ENCODE measurements at regions of chr1 and their contacts with region 1.

Region 1: DNA sequence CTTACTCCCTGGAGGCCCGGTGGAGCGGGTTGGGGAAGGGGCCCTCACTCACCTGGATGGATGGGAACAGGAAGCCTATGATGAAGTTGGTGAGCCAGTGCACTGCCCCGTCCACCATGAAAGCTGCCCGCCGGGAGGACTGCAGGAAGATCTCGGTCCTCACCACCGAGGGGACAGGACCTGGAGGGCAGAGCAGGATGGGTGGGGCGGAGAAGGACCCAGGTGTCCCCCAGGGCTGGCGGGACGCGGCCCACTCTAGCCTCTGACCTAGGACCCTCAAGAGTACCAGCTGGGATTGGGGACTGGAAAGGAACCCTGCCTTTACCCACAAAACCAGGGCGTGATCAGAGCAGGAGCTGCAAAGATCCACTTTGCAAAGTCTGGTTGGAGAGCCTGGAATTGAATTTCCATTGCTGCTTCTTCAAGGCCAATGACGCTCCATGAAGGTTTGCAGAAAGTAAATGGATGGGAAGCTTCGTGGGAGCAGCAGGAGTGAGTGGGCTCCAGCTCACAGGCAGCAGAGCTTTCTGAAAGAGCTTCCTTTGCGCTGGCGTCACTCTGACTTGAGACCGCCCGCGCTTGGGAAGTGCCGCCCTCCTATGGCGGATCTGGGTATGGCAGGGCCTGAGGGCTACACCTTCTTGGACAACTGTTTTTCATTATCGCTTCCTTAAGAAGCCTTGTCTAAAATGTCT is 21.4 kb downstream of the SLC2A7 start:
- DNase-seq: peak; percentile 85
- H3K4me3 ChIP-seq: no peak overlapping the region
- H3K27ac ChIP-seq: no peak overlapping the region
- H3K4me1 ChIP-seq: no peaks in the 10 kb centered on the region
- H3K27me3 ChIP-seq: peaks cover 0 to 4% of the 10 kb centered on the region in 2 experiments
- CTCF ChIP-seq: peak; percentile 91 to 96
- POLR2A ChIP-seq: no peak

Region 2: DNA sequence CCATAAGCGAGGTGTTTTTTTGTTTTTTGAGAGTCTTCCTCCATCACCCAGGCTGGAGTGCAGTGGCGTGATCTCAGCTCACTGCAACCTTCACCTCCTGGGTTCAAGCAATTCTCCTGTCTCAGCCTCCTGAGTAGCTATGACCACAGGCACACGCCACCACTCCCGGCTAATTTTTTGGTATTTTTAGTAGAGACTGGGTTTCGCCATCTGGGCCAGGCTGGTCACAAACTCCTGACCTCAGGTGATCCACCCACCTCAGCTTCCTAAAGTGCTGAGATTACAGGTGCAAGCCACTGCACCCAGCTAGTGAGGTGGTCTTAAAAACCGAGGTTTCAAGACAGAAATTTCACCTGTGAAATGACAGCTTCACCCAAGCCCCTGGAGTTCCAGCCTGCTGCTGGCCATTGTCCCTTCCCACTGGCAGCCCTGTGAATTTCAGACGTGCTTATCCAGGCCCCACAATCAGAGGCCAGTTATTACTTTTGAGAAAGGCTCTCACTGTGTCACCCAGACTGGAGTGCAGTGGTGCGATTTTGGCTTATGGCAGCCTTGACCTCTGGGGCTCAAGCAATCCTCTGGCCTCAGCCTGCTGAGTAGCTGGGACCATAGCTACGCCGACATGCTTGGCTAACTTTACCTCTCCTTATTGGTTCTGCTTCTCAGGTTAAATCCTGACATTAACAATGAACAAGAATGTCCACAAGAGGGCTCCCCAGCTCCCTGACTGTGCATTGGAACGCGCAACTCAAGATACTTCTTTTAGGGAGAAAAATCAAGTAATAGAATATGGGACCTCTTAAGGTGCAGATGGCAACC is 145.8 kb before region 1 on chr1:
- CTCF ChIA-PET with region 1: interaction called, 106 read pairs
- POLR2A ChIA-PET with region 1: no interaction called
- dilution Hi-C with region 1: no loop called
- intact Hi-C with region 1: loop called (anchors 5 kb)
- DNase-seq: peak; percentile 83
- H3K4me3 ChIP-seq: no peak overlapping the region
- H3K27ac ChIP-seq: peak overlapping the region; percentile 80
- H3K4me1 ChIP-seq: peaks cover 36% of the 10 kb centered on the region
- H3K27me3 ChIP-seq: no peaks in the 10 kb centered on the region
- CTCF ChIP-seq: peak; percentile 65
- POLR2A ChIP-seq: peak; percentile 33

Region 3: DNA sequence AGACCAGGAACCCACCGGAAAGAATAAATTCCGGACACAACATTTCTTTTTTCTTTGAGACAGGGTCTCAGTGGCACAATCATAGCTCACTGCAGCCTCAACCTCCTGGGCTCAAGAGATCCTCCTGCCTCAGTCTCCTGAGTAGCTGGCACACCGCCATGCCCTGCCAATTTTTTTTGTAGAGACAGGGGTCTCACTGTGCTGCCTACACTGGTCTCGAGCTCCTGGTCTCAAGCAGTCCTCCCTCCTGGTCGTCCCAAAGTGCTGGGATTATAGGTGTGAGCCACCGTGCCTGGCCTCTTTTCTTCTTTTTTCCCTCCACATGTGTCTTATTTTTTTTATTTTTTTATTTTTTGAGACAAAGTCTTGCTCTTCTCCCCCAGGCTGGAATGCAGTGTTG is 105.8 kb before region 1 on chr1:
- CTCF ChIA-PET with region 1: interaction called, 10 read pairs
- POLR2A ChIA-PET with region 1: no interaction called
- dilution Hi-C with region 1: no loop called
- intact Hi-C with region 1: no loop called
- DNase-seq: no peak
- H3K4me3 ChIP-seq: no peak overlapping the region
- H3K27ac ChIP-seq: peak overlapping the region; percentile 17
- H3K4me1 ChIP-seq: peaks cover 12% of the 10 kb centered on the region
- H3K27me3 ChIP-seq: peaks cover 0 to 5% of the 10 kb centered on the region in 2 experiments
- CTCF ChIP-seq: no peak
- POLR2A ChIP-seq: no peak

Region 4: DNA sequence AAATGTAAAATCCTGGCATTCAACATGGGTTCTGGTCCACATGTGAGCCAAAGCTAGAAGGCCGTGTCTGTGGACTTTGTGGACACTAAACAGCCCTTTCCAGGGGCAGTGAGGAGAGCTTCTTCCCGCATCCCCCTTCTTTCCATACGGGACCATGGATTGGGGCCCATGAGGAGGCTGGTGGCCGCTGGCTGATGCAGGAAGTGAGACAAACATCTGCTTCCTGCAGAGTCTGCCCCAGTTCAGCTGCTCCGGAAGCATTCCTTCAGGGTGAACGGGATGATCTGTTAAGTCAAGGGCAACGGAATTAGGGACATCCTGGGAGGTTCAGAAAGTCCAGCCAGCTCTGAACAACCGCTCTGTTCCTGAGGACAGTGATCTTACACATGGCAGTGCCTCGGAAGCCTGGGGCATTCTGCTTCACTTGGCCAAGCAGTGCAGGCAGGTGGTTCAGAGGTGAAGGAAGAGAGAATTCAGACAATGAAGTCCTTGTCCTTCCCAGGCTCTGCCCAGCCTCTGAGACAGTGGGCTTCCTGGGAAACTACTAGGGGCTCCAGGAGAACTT is 57.6 kb before region 1 on chr1:
- CTCF ChIA-PET with region 1: interaction called, 33 read pairs
- POLR2A ChIA-PET with region 1: no interaction called
- dilution Hi-C with region 1: no loop called
- intact Hi-C with region 1: no loop called
- DNase-seq: peak; percentile 52
- H3K4me3 ChIP-seq: no peak overlapping the region
- H3K27ac ChIP-seq: peak overlapping the region; percentile 46
- H3K4me1 ChIP-seq: peaks cover 14% of the 10 kb centered on the region
- H3K27me3 ChIP-seq: no peaks in the 10 kb centered on the region
- CTCF ChIP-seq: no peak
- POLR2A ChIP-seq: no peak

Region 5: GRCh38 chr1:8992936-8993687 is 11.7 kb before region 1 on chr1:
- CTCF ChIA-PET with region 1: interaction called, 119 read pairs
- POLR2A ChIA-PET with region 1: no interaction called
- dilution Hi-C with region 1: no loop called
- intact Hi-C with region 1: loop called (anchors 2 kb)
- DNase-seq: no peak
- H3K4me3 ChIP-seq: no peak overlapping the region
- H3K27ac ChIP-seq: no peak overlapping the region
- H3K4me1 ChIP-seq: no peaks in the 10 kb centered on the region
- H3K27me3 ChIP-seq: no peaks in the 10 kb centered on the region
- CTCF ChIP-seq: peak; percentile 14 to 27
- POLR2A ChIP-seq: no peak

Region 6: GRCh38 chr1:9065213-9065751 is 60.4 kb after region 1 on chr1:
- CTCF ChIA-PET with region 1: interaction called, 10 read pairs
- POLR2A ChIA-PET with region 1: no interaction called
- dilution Hi-C with region 1: no loop called
- intact Hi-C with region 1: no loop called
- DNase-seq: no peak
- H3K4me3 ChIP-seq: no peak overlapping the region
- H3K27ac ChIP-seq: no peak overlapping the region
- H3K4me1 ChIP-seq: peaks cover 3% of the 10 kb centered on the region
- H3K27me3 ChIP-seq: no peaks in the 10 kb centered on the region
- CTCF ChIP-seq: no peak
- POLR2A ChIP-seq: no peak

Region 7: GRCh38 chr1:9196129-9197040 is 191.5 kb after region 1 on chr1:
- CTCF ChIA-PET with region 1: interaction called, 3 read pairs
- POLR2A ChIA-PET with region 1: no interaction called
- dilution Hi-C with region 1: no loop called
- intact Hi-C with region 1: loop called (anchors 10 kb)
- DNase-seq: peak; percentile 66
- H3K4me3 ChIP-seq: no peak overlapping the region
- H3K27ac ChIP-seq: no peak overlapping the region
- H3K4me1 ChIP-seq: peaks cover 14% of the 10 kb centered on the region
- H3K27me3 ChIP-seq: peaks cover 2 to 5% of the 10 kb centered on the region in 2 experiments
- CTCF ChIP-seq: peak; percentile 74 to 75
- POLR2A ChIP-seq: no peak

Region 8: DNA sequence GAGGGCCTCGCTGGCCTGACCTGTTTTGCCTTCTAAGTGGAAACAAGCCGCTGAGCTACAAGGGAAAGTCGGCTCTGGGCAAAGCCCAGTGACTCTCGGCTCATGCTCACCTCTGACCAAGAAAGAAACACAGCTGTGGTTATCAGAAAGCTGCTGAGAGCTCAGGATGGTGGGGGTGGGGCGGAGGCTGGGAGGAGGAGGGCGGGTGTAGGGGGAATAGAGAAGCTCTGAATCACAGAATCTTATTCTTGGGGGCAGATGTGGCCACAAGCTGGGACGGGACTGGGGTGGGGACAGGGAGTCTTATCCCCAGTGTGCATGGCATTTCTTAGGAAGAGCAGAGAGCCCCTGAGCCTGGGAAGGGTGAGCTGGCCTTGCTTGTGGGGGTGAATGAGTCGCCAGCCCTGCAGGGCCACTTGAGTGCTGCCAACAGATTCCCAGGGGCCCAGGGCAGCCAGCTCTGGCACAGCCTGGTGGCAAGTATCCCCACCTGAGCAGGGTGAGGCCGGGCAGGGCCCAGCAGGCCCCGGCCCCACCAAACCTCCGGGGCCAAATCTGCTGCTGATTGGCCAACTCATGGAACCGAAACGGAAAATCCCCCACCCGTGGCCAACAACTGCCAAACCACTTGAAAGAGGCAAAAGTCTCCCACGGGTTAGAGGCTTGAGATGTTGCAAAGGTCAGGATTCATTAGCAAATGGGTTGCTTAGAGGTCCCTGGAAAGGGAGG is 408.5 kb after region 1 on chr1:
- CTCF ChIA-PET with region 1: no interaction called
- POLR2A ChIA-PET with region 1: no interaction called
- dilution Hi-C with region 1: no loop called
- intact Hi-C with region 1: no loop called
- DNase-seq: peak; percentile 92
- H3K4me3 ChIP-seq: no peak overlapping the region
- H3K27ac ChIP-seq: peak overlapping the region; percentile 80
- H3K4me1 ChIP-seq: peaks cover 20% of the 10 kb centered on the region
- H3K27me3 ChIP-seq: no peaks in the 10 kb centered on the region
- CTCF ChIP-seq: no peak
- POLR2A ChIP-seq: no peak

Measured in endothelial cell of umbilical vein (primary cell).